Motor neuron (in vitro differentiated cells): ENCODE measurements at regions of chr4 and their contacts with region 1.

Region 1: GRCh38 chr4:58871509-58871908 is 1761.3 kb upstream of the IGFBP7 start:
- ATAC-seq: no peak
- H3K4me3 ChIP-seq: no peak overlapping the region
- H3K27ac ChIP-seq: no peak overlapping the region
- H3K4me1 ChIP-seq: no peaks in the 10 kb centered on the region

Region 2: DNA sequence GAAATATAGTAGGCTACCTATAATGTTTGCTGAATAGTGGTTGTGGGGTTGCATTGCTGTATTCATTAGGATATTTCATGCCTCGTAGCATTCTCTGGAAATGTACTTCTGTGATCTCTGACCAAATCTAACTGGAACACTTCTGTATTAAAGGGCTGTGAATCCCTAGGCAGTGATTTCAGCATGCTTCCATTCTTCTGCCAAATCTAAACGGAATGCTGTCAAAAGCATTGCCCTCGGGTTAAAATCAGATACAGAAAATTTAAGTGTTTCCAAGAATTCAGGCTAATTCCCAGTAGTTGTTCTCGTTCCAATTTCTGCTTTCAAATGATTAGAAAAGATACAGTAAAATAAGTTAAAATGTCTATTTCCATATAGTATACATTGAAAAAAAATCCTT is 86.2 kb after region 1 on chr4:
- in situ Hi-C with region 1: loop called in 2 of 9 experiments (anchors 25 kb)
- ATAC-seq: no peak
- H3K4me3 ChIP-seq: no peak overlapping the region
- H3K27ac ChIP-seq: no peak overlapping the region
- H3K4me1 ChIP-seq: no peaks in the 10 kb centered on the region

Region 3: GRCh38 chr4:59002148-59002547 is 130.6 kb after region 1 on chr4:
- in situ Hi-C with region 1: loop called in 1 of 9 experiments (anchors 25 kb)
- ATAC-seq: no peak
- H3K4me3 ChIP-seq: no peak overlapping the region
- H3K27ac ChIP-seq: no peak overlapping the region
- H3K4me1 ChIP-seq: no peaks in the 10 kb centered on the region

Region 4: DNA sequence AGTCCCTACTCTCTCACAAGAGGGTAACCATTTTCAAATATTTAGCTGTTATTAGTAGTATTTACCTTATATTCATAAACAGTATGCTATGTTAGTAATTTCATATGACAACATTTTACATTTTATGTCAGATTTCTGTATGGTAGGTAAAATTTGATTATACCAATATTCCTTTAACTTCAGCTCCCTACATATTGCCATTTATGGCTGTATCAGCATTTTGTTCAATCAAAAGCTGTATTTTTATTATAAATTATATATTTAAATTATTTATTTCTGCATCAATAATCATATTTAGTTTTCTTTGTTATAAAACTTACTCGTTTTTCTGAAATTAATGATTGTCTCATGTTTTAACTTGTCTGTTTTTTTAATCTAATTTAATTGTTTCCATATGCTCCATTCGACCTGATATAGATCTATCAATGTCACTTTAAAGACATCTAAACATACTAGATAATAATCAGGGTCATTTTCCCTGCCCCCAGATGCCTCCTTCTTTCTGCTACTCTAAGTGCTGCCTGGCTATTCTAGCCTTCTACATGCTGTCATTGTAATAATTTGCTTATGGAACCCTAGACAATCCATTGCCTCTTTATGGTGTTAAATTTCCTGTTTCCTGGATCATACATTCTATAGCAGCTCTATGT is 351.9 kb after region 1 on chr4:
- in situ Hi-C with region 1: no loop called
- ATAC-seq: no peak
- H3K4me3 ChIP-seq: no peak overlapping the region
- H3K27ac ChIP-seq: no peak overlapping the region
- H3K4me1 ChIP-seq: no peaks in the 10 kb centered on the region

Region 5: GRCh38 chr4:60122820-60123219 is 1251.3 kb after region 1 on chr4:
- in situ Hi-C with region 1: no loop called
- ATAC-seq: no peak
- H3K4me3 ChIP-seq: no peak overlapping the region
- H3K27ac ChIP-seq: no peak overlapping the region
- H3K4me1 ChIP-seq: peaks cover 0 to 6% of the 10 kb centered on the region in 2 donors